Psoas muscle (tissue), 8 donors: ENCODE measurements at regions of chr11 and their contacts with region 1.

Region 1: GRCh38 chr11:6315811-6316425 is 4.4 kb downstream of the CAVIN3 start:
- DNase-seq: peak; percentile 47 to 72
- ATAC-seq: peak in 3 of 4 donors; percentile 46 to 50 (median 47)
- H3K4me3 ChIP-seq: peak overlapping the region; percentile 39
- H3K27ac ChIP-seq: no peak overlapping the region
- H3K4me1 ChIP-seq: peaks cover 17% of the 10 kb centered on the region
- H3K27me3 ChIP-seq: no peaks in the 10 kb centered on the region
- CTCF ChIP-seq: peak; percentile 87

Region 2: DNA sequence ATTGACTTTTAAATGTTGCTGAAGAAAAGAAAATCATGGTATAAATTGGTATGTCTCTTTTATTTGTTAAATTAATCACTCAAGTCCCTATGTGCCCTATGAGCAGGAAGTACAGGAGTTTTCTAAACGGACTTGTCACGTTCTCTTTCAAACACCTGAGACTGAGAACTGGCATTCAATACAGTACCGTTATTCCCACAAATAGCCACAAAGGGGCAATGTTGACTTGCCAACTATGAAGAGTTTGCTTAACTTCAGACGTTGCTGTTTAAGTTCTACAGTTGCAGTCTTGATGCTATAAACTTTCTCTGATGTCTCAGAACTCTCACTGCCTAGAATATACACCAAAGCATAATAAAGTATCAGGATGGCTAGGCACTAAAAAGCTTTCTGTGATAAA is 293.0 kb before region 1 on chr11:
- intact Hi-C with region 1: loop called in 1 of 2 experiments (anchors 2 kb)
- DNase-seq: no peak
- ATAC-seq: peak in 2 of 4 donors; percentile 39 to 56
- H3K4me3 ChIP-seq: no peak overlapping the region
- H3K27ac ChIP-seq: no peak overlapping the region
- H3K4me1 ChIP-seq: no peaks in the 10 kb centered on the region
- H3K27me3 ChIP-seq: no peaks in the 10 kb centered on the region
- CTCF ChIP-seq: peak; percentile 46

Region 3: GRCh38 chr11:6234387-6235107 is 81.4 kb before region 1 on chr11 and contains the start of gene FHIP1B:
- intact Hi-C with region 1: loop called in 1 of 2 experiments (anchors 5 kb)
- DNase-seq: peak; percentile 100
- ATAC-seq: peak; percentile 97 to 99 (median 98)
- H3K4me3 ChIP-seq: peak within 1 kb of the TSS; percentile 83
- H3K27ac ChIP-seq: peak within 1 kb of the TSS; percentile 77
- H3K4me1 ChIP-seq: peaks cover 19% of the 10 kb centered on the region
- H3K27me3 ChIP-seq: no peaks in the 10 kb centered on the region
- CTCF ChIP-seq: no peak
- total RNA-seq, gene FHIP1B: 9.1 to 21.6 (median 15.6) TPM

Region 4: DNA sequence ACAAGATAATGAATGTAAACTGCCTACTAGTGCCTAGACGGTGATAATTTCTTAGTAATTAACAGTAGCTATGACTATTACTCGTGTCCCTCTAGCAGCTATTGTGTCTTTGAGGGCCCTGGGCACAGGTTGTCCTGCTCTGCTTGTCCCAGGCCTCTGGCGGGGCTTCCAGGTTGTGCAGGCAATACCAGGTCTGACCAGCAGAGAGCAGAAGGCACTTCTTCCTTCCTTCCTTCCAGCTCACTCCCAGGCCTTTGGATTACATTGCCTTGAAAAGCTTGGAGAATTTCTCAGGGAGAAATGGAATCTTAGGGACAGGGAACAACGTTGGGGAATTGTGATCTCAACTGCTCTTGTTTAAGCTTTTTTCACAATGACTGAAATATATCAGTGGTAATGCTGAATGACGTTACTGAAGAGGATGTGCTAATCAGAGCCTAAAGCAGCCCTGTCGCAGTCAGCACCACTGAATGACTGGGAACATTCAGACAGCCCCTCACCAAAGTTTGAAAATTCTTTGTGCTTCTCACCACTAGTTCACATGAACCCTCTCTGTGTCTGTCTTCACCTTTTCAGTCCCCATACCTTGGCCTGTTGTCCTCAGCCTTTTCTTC is 64.7 kb before region 1 on chr11:
- intact Hi-C with region 1: loop called (anchors 2 to 5 kb)
- DNase-seq: peak; percentile 63 to 82
- ATAC-seq: peak; percentile 87 to 98 (median 95)
- H3K4me3 ChIP-seq: no peak overlapping the region
- H3K27ac ChIP-seq: no peak overlapping the region
- H3K4me1 ChIP-seq: no peaks in the 10 kb centered on the region
- H3K27me3 ChIP-seq: peaks cover 0 to 7% (median 0%) of the 10 kb centered on the region in 3 donors
- CTCF ChIP-seq: peak; percentile 87

Region 5: GRCh38 chr11:6353367-6353987 is 37.6 kb after region 1 on chr11:
- intact Hi-C with region 1: loop called in 1 of 2 experiments (anchors 5 kb)
- DNase-seq: peak; percentile 38 to 68
- ATAC-seq: peak; percentile 63 to 82 (median 72)
- H3K4me3 ChIP-seq: no peak overlapping the region
- H3K27ac ChIP-seq: no peak overlapping the region
- H3K4me1 ChIP-seq: no peaks in the 10 kb centered on the region
- H3K27me3 ChIP-seq: no peaks in the 10 kb centered on the region
- CTCF ChIP-seq: peak; percentile 94